ENCODE measurements at regions of chr19 and their contacts with region 1.

Region 1: DNA sequence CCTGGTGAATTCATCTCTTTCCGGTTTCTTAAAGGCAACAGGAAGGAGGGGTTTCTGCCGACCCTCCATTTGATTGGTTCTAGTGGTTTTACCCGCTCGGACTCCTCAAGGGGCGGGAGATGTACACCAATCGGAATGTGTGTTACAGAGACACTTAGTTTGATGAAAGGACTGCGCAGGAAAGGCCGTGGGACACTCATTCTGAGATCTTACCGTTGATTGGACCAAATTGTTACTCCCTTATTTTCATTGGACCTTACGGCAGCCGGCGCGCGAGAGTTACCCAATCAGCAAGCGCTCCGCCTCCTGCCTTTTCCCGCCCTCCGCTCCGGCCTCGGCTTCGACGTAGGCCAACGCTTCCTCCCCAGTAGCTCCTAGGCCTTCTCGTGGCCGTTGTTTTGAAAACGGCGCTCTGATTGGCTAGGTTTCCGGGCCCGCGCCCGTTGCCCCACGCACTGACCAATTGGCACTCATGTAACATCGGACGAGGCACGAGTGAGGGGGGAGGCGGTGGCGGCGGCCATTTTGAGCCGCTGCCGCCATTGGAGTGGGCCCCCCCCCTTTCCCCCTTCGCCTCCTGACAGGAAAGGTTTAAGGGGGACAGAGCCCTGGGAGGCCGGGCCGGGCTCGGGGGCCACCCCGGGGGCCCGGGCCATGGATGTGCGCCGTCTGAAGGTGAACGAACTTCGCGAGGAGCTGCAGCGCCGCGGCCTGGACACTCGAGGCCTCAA is at the start of gene HNRNPUL1:
- DNase-seq: peak; percentile 100
- H3K4me3 ChIP-seq: peak within 1 kb of the TSS; percentile 75 to 99 (median 88)
- H3K27ac ChIP-seq: peak within 1 kb of the TSS; percentile 97 to 100 (median 100)
- H3K4me1 ChIP-seq: peaks cover 23 to 43% (median 27%) of the 10 kb centered on the region in 3 donors
- H3K27me3 ChIP-seq: no peaks in the 10 kb centered on the region
- CTCF ChIP-seq: peak in 4 of 6 experiments; percentile 21 to 31 (median 26)
- POLR2A ChIP-seq: peak in 1 of 4 donors; percentile 61
- total RNA-seq, gene HNRNPUL1: 98.1 to 127 (median 113) TPM

Region 2: GRCh38 chr19:41206926-41207750 is 56.9 kb before region 1 on chr19:
- intact Hi-C with region 1: loop called (anchors 5 kb)
- DNase-seq: no peak
- H3K4me3 ChIP-seq: peak overlapping the region in 1 of 4 donors; percentile 32
- H3K27ac ChIP-seq: peak overlapping the region; percentile 0 to 69 (median 52)
- H3K4me1 ChIP-seq: no peaks in the 10 kb centered on the region
- H3K27me3 ChIP-seq: no peaks in the 10 kb centered on the region
- CTCF ChIP-seq: no peak
- POLR2A ChIP-seq: no peak

Region 3: DNA sequence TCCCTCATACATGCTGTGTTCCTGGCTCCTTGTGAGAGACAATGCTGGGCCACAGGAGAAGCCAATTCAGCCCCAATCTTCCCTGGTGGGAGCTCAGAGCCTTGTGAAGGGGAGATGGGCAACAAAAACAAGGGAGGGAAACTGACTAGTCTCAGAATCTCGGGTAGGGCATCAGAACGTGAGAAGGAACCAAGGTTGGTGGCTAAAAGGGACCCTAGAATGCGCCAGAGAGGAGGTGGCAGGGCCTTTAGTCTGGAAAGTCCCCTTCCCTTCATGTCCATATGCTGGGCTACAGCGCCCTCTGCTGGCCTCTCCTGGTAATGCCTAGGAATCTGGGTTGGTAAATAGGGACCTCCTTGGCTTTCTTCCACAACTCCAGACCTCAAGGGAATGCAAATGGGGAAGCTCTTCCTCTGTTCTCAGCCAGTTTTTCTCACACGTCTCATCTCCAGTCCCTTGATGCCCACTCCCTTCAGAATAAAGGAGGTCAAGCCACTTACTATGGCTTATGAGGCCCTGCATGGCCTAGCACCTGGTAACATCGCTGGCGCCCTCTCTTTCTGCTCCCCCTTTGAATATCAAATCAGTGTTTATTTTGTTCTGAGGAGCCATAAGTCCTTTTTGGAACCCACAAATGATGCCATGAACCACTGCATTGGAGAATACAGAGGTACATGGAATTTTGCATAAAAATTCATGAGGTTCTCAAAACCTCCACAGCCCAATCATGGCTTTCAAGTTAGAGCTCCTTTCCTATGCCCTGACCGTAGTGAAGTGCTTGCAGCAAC is 44.6 kb after region 1 on chr19:
- intact Hi-C with region 1: loop called (anchors 5 kb)
- DNase-seq: peak; percentile 47
- H3K4me3 ChIP-seq: peak overlapping the region in 3 of 4 donors; percentile 80 to 97 (median 80)
- H3K27ac ChIP-seq: peak overlapping the region; percentile 96 to 99 (median 96)
- H3K4me1 ChIP-seq: peaks cover 34 to 78% (median 37%) of the 10 kb centered on the region in 3 donors
- H3K27me3 ChIP-seq: no peaks in the 10 kb centered on the region
- CTCF ChIP-seq: peak; percentile 97 to 99 (median 98)
- POLR2A ChIP-seq: no peak

Region 4: GRCh38 chr19:41327576-41328156 is 63.7 kb after region 1 on chr19:
- intact Hi-C with region 1: no loop called
- DNase-seq: peak; percentile 72
- H3K4me3 ChIP-seq: peak overlapping the region; percentile 20 to 53 (median 38)
- H3K27ac ChIP-seq: peak overlapping the region; percentile 85 to 90 (median 88)
- H3K4me1 ChIP-seq: peaks cover 60 to 83% (median 65%) of the 10 kb centered on the region in 3 donors
- H3K27me3 ChIP-seq: no peaks in the 10 kb centered on the region
- CTCF ChIP-seq: peak in 2 of 6 experiments; percentile 6 to 10
- POLR2A ChIP-seq: peak in 2 of 4 donors; percentile 32 to 47